PC-3 (cell line): ENCODE measurements at regions of chr6 and their contacts with region 1.

Region 1: GRCh38 chr6:34392497-34393190 is at the start of gene NUDT3:
- DNase-seq: peak; percentile 91
- ATAC-seq: peak; percentile 83
- H3K4me3 ChIP-seq: peak within 1 kb of the TSS; percentile 96
- H3K27ac ChIP-seq: peak within 1 kb of the TSS; percentile 72
- H3K4me1 ChIP-seq: peaks cover 8% of the 10 kb centered on the region
- H3K27me3 ChIP-seq: no peaks in the 10 kb centered on the region
- CTCF ChIP-seq: peak; percentile 74
- total RNA-seq, gene NUDT3: 24.6 and 28.7 TPM in 2 replicates

Region 2: GRCh38 chr6:34341481-34341971 is 51.1 kb before region 1 on chr6:
- CTCF ChIA-PET with region 1: no interaction called
- POLR2A ChIA-PET with region 1: no interaction called
- intact Hi-C with region 1: loop called (anchors 2 kb)
- DNase-seq: peak; percentile 96
- ATAC-seq: peak; percentile 97
- H3K4me3 ChIP-seq: peak overlapping the region; percentile 36; the same call in 1 of the 2 replicates
- H3K27ac ChIP-seq: peak overlapping the region; percentile 72
- H3K4me1 ChIP-seq: peaks cover 46% of the 10 kb centered on the region
- H3K27me3 ChIP-seq: no peaks in the 10 kb centered on the region
- CTCF ChIP-seq: no peak

Region 3: GRCh38 chr6:34359418-34360158 is 33.1 kb before region 1 on chr6:
- CTCF ChIA-PET with region 1: no interaction called
- POLR2A ChIA-PET with region 1: no interaction called
- intact Hi-C with region 1: loop called (anchors 1 kb)
- DNase-seq: peak; percentile 18
- ATAC-seq: no peak
- H3K4me3 ChIP-seq: no peak overlapping the region
- H3K27ac ChIP-seq: no peak overlapping the region
- H3K4me1 ChIP-seq: peaks cover 17% of the 10 kb centered on the region
- H3K27me3 ChIP-seq: no peaks in the 10 kb centered on the region
- CTCF ChIP-seq: no peak